ENCODE measurements at regions of chr6 and their contacts with region 1.

Region 1: GRCh38 chr6:104207635-104208034 is 652.1 kb downstream of the HACE1 start:
- DNase-seq: no peak
- ATAC-seq: no peak
- H3K4me3 ChIP-seq: no peak overlapping the region
- H3K27ac ChIP-seq: no peak overlapping the region
- H3K4me1 ChIP-seq: no peaks in the 10 kb centered on the region
- H3K27me3 ChIP-seq: no peaks in the 10 kb centered on the region
- CTCF ChIP-seq: no peak

Region 2: DNA sequence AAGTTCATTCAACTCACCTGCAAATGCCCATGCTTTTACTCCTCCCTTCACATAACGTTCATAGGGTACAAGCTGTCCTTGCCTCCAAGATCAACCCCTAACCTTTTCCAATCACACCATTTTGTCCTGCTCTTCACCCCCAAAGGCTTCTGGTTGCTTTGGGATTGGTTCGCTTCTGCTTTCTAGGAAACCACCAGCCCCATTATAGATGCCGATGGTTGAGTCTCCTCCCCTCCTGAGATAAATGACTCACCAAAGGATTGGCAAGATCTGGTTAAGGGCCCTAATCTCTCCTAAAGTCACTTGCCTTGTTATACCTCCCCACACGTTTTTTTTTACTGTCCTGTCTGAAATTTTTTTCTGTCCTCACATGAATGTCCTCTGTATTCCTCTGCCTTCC is 340.7 kb after region 1 on chr6:
- CTCF ChIA-PET with region 1: no interaction called
- POLR2A ChIA-PET with region 1: interaction called, 12 read pairs
- in situ Hi-C with region 1: no loop called
- intact Hi-C with region 1: no loop called
- DNase-seq: no peak
- ATAC-seq: no peak
- H3K4me3 ChIP-seq: no peak overlapping the region
- H3K27ac ChIP-seq: no peak overlapping the region
- H3K4me1 ChIP-seq: no peaks in the 10 kb centered on the region
- H3K27me3 ChIP-seq: no peaks in the 10 kb centered on the region
- CTCF ChIP-seq: no peak